A673 (cell line): ENCODE measurements at regions of chr17 and their contacts with region 1.

Region 1: DNA sequence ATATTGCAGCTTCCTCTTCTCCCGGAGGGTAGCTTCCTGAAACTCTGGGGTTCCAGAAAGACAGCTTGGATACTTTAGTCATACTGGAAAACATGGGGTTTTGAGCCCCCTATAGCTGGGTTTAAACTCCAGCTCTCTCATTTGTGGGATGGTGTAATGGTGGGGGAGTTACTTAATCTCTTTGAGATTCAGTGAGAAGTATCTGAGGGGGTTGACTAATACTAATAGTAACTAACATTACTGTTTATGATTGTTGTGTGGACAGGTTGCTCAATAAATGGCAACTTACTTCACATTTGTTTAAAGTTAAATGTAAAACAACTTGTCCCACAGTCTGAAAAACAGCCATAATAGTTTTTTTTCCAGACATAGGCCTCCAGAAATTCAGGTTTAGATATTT is 5.1 kb upstream of the SUZ12 start:
- DNase-seq: no peak
- H3K4me3 ChIP-seq: no peak overlapping the region
- H3K27ac ChIP-seq: no peak overlapping the region
- H3K4me1 ChIP-seq: no peaks in the 10 kb centered on the region
- H3K27me3 ChIP-seq: no peaks in the 10 kb centered on the region
- CTCF ChIP-seq: no peak

Region 2: DNA sequence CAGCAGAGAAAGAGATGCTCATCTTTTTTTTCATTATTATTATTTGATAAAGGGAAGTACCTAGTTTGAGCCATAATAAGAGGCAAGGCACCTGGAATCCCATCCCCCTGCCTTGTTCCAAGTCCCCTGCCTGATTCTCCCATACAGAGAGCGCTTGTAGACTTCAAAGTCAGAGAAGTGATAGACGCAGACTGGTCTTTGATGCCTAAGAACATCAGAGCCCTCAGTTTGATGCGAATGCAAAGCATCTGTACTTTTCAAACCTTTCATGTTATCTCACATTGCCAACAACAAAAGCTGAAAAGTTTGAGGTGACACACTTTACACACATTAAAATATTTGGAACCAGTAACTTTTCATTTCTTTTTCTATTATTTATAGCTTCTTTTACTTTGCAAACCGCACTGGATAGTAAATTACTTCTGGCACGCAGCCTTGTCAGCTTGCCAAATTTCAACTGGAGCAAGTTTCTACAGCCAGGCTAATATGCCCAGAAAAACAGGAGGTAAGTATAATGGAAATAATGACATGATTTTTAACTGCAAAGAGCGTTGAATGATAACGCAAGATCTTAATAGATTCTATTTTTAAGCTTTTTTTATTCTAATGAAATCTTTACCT is 24.3 kb before region 1 on chr17:
- CTCF ChIA-PET with region 1: no interaction called
- POLR2A ChIA-PET with region 1: interaction called, 11 read pairs
- intact Hi-C with region 1: no loop called
- DNase-seq: peak; percentile 5
- H3K4me3 ChIP-seq: no peak overlapping the region
- H3K27ac ChIP-seq: no peak overlapping the region
- H3K4me1 ChIP-seq: peaks cover 7% of the 10 kb centered on the region
- H3K27me3 ChIP-seq: no peaks in the 10 kb centered on the region
- CTCF ChIP-seq: no peak

Region 3: DNA sequence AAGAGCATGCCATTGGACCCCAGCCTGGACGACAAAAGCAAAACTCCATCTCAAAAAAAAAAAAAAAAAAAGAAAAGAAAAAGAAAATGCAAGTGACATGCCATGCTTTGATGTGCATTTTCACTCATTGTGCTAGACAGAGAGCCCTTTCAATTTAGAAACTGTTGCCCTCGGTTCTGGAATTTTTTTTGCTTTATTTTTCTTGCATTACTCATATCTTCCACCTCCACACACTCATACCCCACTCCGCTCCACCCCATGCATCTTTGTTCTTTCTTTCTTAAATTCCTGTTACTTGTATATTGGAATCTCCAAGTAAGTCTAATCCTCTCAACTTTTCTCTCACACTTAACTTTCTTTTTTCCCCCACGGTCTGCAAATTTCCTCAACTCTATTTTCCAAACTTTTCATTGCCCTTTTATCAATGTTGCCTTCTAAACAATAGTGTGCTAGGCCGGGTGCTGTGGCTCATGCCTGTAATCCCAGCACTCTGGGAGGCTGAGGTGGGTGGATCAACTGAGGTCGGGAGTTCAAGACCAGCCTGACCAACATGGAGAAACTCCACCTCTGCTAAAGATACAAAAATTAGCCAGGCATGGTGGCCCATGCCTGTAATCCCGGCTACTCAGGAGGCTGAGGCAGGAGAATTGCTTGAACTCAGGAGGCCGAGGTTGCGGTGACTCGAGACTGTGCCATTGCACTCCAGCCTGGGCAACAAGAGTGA is 11.8 kb before region 1 on chr17:
- CTCF ChIA-PET with region 1: no interaction called
- POLR2A ChIA-PET with region 1: no interaction called
- intact Hi-C with region 1: no loop called
- DNase-seq: no peak
- H3K4me3 ChIP-seq: no peak overlapping the region
- H3K27ac ChIP-seq: no peak overlapping the region
- H3K4me1 ChIP-seq: no peaks in the 10 kb centered on the region
- H3K27me3 ChIP-seq: no peaks in the 10 kb centered on the region
- CTCF ChIP-seq: no peak